GM23248 (cell line): ENCODE measurements at regions of chr2 and their contacts with region 1.

Region 1: GRCh38 chr2:30072250-30072842 is 74.5 kb upstream of the YPEL5 start:
- DNase-seq: peak; percentile 84
- H3K4me3 ChIP-seq: no peak overlapping the region
- H3K27ac ChIP-seq: no peak overlapping the region
- H3K4me1 ChIP-seq: no peaks in the 10 kb centered on the region
- H3K27me3 ChIP-seq: peaks cover 43% of the 10 kb centered on the region

Region 2: DNA sequence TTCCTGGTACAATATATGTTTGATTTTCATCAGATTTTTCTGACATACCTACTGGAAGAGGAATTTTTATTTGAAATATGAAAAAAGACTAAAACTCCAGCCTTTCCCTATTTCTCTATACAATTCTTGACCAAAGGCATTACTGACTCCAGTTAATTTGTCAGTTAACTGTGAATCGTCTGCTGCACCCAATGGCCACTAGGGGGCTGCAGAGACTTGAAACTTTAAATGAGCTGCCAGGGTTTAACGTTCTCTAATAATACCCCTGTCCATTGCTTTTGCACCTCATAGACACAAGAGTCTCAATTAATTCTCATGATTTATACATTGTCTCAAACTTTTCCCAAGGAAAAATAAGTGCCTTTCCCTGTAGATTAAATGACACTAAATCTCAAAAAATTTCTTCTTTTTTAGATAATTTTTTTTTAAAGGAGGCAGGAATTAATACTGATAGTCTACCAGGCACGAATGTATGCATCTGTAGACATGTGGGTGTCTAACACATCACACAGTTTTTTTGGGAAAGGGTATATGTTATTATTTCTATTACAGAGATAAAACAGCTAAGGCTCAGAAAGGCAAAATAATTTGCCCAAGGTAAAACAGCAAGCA is 149.1 kb before region 1 on chr2:
- in situ Hi-C with region 1: loop called (anchors 10 kb)
- DNase-seq: peak; percentile 79
- H3K4me3 ChIP-seq: no peak overlapping the region
- H3K27ac ChIP-seq: no peak overlapping the region
- H3K4me1 ChIP-seq: peaks cover 3% of the 10 kb centered on the region; the same call in 1 of the 2 replicates
- H3K27me3 ChIP-seq: peaks cover 38% of the 10 kb centered on the region